B cell (primary cell): ENCODE measurements at regions of chr1 and their contacts with region 1.

Region 1: GRCh38 chr1:25099343-25099951 is 132.9 kb downstream of the SYF2 start:
- DNase-seq: peak; percentile 42
- ATAC-seq: peak; percentile 34
- H3K4me3 ChIP-seq: no peak overlapping the region
- H3K4me3 Mint-ChIP-seq: peak overlapping the region; percentile 65
- H3K27ac ChIP-seq: no peak overlapping the region
- H3K27ac Mint-ChIP-seq: peak overlapping the region; percentile 66
- H3K4me1 ChIP-seq: peaks cover 29 to 49% of the 10 kb centered on the region in 2 donors
- H3K4me1 Mint-ChIP-seq: peaks cover 44% of the 10 kb centered on the region
- H3K27me3 ChIP-seq: no peaks in the 10 kb centered on the region
- H3K27me3 Mint-ChIP-seq: no peaks in the 10 kb centered on the region
- CTCF ChIP-seq: no peak

Region 2: GRCh38 chr1:24897767-24898483 is 201.5 kb before region 1 on chr1:
- CTCF ChIA-PET with region 1: interaction called, 11 read pairs
- POLR2A ChIA-PET with region 1: no interaction called
- intact Hi-C with region 1: no loop called
- DNase-seq: peak; percentile 61
- ATAC-seq: peak; percentile 51
- H3K4me3 ChIP-seq: no peak overlapping the region
- H3K4me3 Mint-ChIP-seq: no peak overlapping the region
- H3K27ac ChIP-seq: no peak overlapping the region
- H3K27ac Mint-ChIP-seq: peak overlapping the region; percentile 68
- H3K4me1 ChIP-seq: peaks cover 0 to 10% of the 10 kb centered on the region in 2 donors
- H3K4me1 Mint-ChIP-seq: peaks cover 33% of the 10 kb centered on the region
- H3K27me3 ChIP-seq: no peaks in the 10 kb centered on the region
- H3K27me3 Mint-ChIP-seq: no peaks in the 10 kb centered on the region
- CTCF ChIP-seq: peak; percentile 78

Region 3: GRCh38 chr1:24955161-24955560 is 144.3 kb before region 1 on chr1:
- CTCF ChIA-PET with region 1: interaction called, 11 read pairs
- POLR2A ChIA-PET with region 1: no interaction called
- intact Hi-C with region 1: no loop called
- DNase-seq: no peak
- ATAC-seq: peak; percentile 67
- H3K4me3 ChIP-seq: no peak overlapping the region
- H3K4me3 Mint-ChIP-seq: peak overlapping the region; percentile 72
- H3K27ac ChIP-seq: no peak overlapping the region
- H3K27ac Mint-ChIP-seq: peak overlapping the region; percentile 76
- H3K4me1 ChIP-seq: peaks cover 48 to 76% of the 10 kb centered on the region in 2 donors
- H3K4me1 Mint-ChIP-seq: peaks cover 70% of the 10 kb centered on the region
- H3K27me3 ChIP-seq: no peaks in the 10 kb centered on the region
- H3K27me3 Mint-ChIP-seq: no peaks in the 10 kb centered on the region
- CTCF ChIP-seq: no peak

Region 4: GRCh38 chr1:25031966-25032667 is 67.3 kb before region 1 on chr1:
- CTCF ChIA-PET with region 1: interaction called, 41 read pairs
- POLR2A ChIA-PET with region 1: no interaction called
- intact Hi-C with region 1: loop called (anchors 5 kb)
- DNase-seq: peak; percentile 92
- ATAC-seq: peak; percentile 68
- H3K4me3 ChIP-seq: peak overlapping the region in 1 of 5 experiments; percentile 29
- H3K4me3 Mint-ChIP-seq: peak overlapping the region; percentile 89
- H3K27ac ChIP-seq: peak overlapping the region; percentile 82 to 89
- H3K27ac Mint-ChIP-seq: peak overlapping the region; percentile 98
- H3K4me1 ChIP-seq: peaks cover 77 to 92% of the 10 kb centered on the region in 2 donors
- H3K4me1 Mint-ChIP-seq: peaks cover 79% of the 10 kb centered on the region
- H3K27me3 ChIP-seq: no peaks in the 10 kb centered on the region
- H3K27me3 Mint-ChIP-seq: no peaks in the 10 kb centered on the region
- CTCF ChIP-seq: peak; percentile 38

Region 5: DNA sequence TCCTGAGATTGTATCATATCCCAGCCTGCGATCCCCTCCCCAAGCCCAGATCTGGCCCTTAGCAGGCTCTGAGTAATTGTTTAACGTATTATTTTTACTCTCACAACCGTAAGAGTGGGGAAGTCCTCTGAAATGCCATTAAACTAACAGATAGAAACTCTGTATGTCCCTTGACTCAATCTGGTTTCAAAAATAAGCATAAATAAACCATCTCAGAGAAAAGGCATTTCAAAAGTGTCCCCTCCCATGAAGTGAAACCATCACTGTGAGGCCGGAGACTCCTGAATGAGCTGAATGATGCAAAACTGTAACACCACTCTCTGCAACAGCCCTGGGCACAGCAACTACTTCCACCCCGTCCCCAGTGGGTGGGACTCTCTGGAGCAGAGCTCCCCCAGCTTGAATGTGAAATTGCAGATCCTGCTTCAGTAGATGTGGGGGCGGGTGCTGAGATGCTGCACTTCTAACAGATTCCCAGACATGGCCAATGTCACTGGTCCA is 28.7 kb after region 1 on chr1:
- CTCF ChIA-PET with region 1: no interaction called
- POLR2A ChIA-PET with region 1: no interaction called
- intact Hi-C with region 1: no loop called
- DNase-seq: no peak
- ATAC-seq: no peak
- H3K4me3 ChIP-seq: no peak overlapping the region
- H3K4me3 Mint-ChIP-seq: no peak overlapping the region
- H3K27ac ChIP-seq: no peak overlapping the region
- H3K27ac Mint-ChIP-seq: no peak overlapping the region
- H3K4me1 ChIP-seq: no peaks in the 10 kb centered on the region
- H3K4me1 Mint-ChIP-seq: no peaks in the 10 kb centered on the region
- H3K27me3 ChIP-seq: no peaks in the 10 kb centered on the region
- H3K27me3 Mint-ChIP-seq: no peaks in the 10 kb centered on the region
- CTCF ChIP-seq: no peak